Activated B cell treated with CpG ODN at 0.5 μM for 24 hours (primary cell): ENCODE measurements at regions of chr2 and their contacts with region 1.

Region 1: GRCh38 chr2:161136696-161137324 is 23.4 kb upstream of the TANK start:
- DNase-seq: no peak
- ATAC-seq: peak; percentile 88
- H3K4me3 Mint-ChIP-seq: peak overlapping the region; percentile 96
- H3K27ac Mint-ChIP-seq: peak overlapping the region; percentile 99
- H3K4me1 Mint-ChIP-seq: peaks cover 50% of the 10 kb centered on the region
- H3K27me3 Mint-ChIP-seq: no peaks in the 10 kb centered on the region
- CTCF ChIP-seq: no peak

Region 2: DNA sequence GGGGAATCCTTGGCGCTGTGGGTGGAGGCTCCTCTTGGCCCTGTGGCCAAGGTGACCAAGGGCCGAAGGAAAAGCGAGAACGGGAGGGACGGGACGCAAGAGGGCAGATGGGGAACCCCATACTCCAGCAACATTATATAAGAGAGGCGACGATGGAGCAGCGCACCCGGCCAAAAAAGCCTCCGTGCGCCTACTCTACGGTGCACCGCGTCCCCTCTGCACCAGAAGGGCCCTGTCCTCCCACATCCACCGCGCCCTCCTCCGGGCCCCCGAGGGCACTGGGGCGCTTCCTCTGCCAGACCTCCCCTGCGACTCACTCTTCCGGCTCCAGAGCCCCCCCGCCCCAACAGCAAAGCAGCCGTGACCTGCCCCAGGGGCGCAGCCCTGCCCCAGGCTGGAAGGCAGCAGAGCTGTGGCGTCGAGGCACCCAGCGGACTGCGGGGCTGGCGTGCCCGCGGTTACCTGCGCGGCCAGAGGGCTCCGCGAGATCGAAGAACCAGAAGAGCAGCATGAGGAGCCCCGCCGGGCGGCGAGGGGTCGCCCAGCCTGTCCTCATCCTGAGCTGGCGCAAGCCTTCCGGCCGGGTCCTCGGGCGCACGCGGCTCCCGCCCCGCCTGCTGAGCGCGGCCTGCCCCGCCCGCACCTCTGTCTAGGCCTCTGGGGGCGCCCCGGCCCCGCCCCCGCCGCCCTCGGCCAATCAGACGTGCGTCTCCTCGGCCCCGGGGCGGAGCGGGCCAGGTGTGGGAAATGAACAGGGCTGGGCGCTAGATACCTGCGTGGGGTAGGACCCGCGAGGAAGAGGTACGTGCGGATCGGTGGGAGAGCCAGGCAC is 1232.5 kb before region 1 on chr2:
- CTCF ChIA-PET with region 1: no interaction called
- POLR2A ChIA-PET with region 1: no interaction called
- intact Hi-C with region 1: loop called (anchors 10 kb)
- DNase-seq: peak; percentile 87
- ATAC-seq: peak; percentile 85
- H3K4me3 Mint-ChIP-seq: peak within 1 kb of the TSS; percentile 99
- H3K27ac Mint-ChIP-seq: peak within 1 kb of the TSS; percentile 98
- H3K4me1 Mint-ChIP-seq: peaks cover 57% of the 10 kb centered on the region
- H3K27me3 Mint-ChIP-seq: no peaks in the 10 kb centered on the region
- CTCF ChIP-seq: no peak

Region 3: GRCh38 chr2:161077367-161078210 is 59.2 kb before region 1 on chr2:
- CTCF ChIA-PET with region 1: no interaction called
- POLR2A ChIA-PET with region 1: no interaction called
- intact Hi-C with region 1: loop called (anchors 2 kb)
- DNase-seq: no peak
- ATAC-seq: peak; percentile 87
- H3K4me3 Mint-ChIP-seq: peak overlapping the region; percentile 60
- H3K27ac Mint-ChIP-seq: peak overlapping the region; percentile 80
- H3K4me1 Mint-ChIP-seq: peaks cover 27% of the 10 kb centered on the region
- H3K27me3 Mint-ChIP-seq: no peaks in the 10 kb centered on the region
- CTCF ChIP-seq: no peak

Region 4: DNA sequence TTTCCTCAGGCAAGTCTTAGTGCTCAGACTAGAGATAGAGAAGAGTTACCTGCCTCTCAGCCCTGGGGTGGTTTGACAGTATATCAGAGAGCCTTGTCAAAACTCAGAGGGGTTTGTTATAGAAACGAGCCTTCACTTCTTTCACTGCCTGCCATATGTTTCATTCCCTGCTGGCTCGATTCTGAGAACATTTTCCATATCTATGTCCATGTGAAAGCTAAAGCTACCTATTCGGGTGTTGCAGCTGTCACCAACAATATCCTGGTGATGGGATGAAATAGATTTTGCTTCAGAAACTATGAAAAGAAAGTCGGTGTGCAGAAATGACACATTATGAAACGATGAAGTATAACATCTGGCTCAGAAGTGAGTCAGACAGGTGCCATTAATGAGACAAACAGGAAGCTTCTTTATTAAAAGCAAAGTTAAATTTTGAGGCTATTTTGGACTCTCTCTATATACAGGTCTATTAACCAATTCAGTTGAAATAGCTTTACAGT is 32.7 kb before region 1 on chr2:
- CTCF ChIA-PET with region 1: interaction called, 3 read pairs
- POLR2A ChIA-PET with region 1: interaction called, 17 read pairs
- intact Hi-C with region 1: no loop called
- DNase-seq: no peak
- ATAC-seq: peak; percentile 88
- H3K4me3 Mint-ChIP-seq: peak overlapping the region; percentile 70
- H3K27ac Mint-ChIP-seq: peak overlapping the region; percentile 76
- H3K4me1 Mint-ChIP-seq: peaks cover 28% of the 10 kb centered on the region
- H3K27me3 Mint-ChIP-seq: no peaks in the 10 kb centered on the region
- CTCF ChIP-seq: no peak

Region 5: GRCh38 chr2:161147856-161148569 is 11.2 kb after region 1 on chr2:
- CTCF ChIA-PET with region 1: no interaction called
- POLR2A ChIA-PET with region 1: interaction called, 3 read pairs
- intact Hi-C with region 1: loop called (anchors 1 kb)
- DNase-seq: no peak
- ATAC-seq: peak; percentile 58
- H3K4me3 Mint-ChIP-seq: no peak overlapping the region
- H3K27ac Mint-ChIP-seq: peak overlapping the region; percentile 50
- H3K4me1 Mint-ChIP-seq: peaks cover 74% of the 10 kb centered on the region
- H3K27me3 Mint-ChIP-seq: no peaks in the 10 kb centered on the region
- CTCF ChIP-seq: no peak

Region 6: DNA sequence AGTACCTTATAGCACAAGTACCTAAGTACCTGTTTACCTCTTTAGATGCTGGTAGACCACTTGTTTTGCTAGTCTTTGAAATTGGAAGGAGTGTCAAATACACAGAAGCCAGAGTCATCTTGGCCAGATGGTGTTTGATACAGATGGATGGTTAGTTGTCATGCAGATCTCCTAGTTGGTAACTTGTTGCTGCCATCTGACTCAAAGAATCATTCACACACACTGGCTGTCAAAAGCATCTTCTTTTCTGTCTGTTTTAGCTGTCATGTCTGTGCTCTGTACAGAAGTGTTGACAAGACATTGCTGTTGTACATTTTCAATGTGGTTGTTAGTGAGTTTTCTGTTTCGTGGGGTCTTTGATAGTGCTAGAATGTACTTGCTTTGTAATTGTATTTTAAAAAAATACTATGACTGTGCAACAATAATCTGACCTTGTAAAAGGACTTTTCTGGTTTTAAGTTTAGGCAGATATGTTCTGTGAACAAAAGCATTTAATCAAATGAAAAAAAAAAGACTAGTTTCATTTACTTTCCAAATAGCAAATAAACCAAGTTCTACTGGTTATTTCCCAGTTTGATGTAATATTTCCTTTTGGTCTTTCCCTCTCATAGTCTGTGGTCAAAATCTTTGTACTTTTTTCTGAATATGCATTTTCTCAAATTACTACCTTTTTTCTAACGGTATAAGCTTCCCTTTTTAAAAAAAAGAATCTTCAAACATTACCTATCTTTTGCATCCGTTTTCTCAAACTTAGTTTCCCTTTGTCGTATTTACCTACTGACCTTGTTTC is 63.3 kb after region 1 on chr2:
- CTCF ChIA-PET with region 1: no interaction called
- POLR2A ChIA-PET with region 1: interaction called, 4 read pairs
- intact Hi-C with region 1: loop called (anchors 5 kb)
- DNase-seq: no peak
- ATAC-seq: peak; percentile 89
- H3K4me3 Mint-ChIP-seq: peak overlapping the region; percentile 63
- H3K27ac Mint-ChIP-seq: peak overlapping the region; percentile 84
- H3K4me1 Mint-ChIP-seq: peaks cover 60% of the 10 kb centered on the region
- H3K27me3 Mint-ChIP-seq: no peaks in the 10 kb centered on the region
- CTCF ChIP-seq: no peak